PC-9 (cell line): ENCODE measurements at regions of chr9 and their contacts with region 1.

Region 1: DNA sequence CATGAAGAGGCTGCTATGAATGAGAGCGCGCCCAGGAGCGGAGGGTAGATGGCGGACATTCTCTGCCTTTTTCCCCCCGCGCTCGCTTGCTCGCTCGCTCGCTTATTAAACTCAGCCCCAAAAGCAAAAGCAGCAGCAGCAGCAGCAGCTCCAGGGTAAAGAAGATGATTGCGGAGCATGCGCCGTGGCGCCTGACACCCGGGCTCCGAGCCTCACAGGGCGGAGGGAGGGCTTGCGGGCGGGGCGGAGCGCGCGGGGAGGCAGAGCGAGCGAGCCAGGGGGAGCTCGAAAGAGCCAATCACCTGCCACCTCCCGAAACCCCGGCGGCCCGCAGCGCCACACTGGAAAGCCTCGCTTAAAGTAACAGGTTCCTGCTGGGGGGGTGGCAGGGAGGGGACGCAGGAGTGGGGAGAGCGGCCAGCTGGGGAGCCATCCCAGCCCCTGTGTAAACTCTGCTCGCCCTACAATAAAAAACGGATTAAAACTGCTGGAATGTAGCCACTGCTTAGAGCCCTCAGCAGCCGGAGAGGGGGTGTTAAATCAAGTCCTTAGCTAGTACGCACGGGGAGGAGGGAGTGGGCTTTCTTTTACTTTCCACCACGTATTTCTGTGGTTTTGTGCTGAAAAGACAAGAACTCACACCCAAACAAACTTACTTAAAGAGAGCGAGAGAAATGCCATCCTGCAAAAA is at the start of gene MLLT3:
- DNase-seq: peak; percentile 77 to 89
- H3K4me3 ChIP-seq: peak within 1 kb of the TSS; percentile 96
- H3K27ac ChIP-seq: peak within 1 kb of the TSS; percentile 63
- H3K4me1 ChIP-seq: peaks cover 23% of the 10 kb centered on the region
- H3K27me3 ChIP-seq: peaks cover 8% of the 10 kb centered on the region; the same call in 1 of the 2 replicates
- CTCF ChIP-seq: no peak
- total RNA-seq, gene MLLT3: 21.6 and 21.7 TPM in 2 replicates

Region 2: GRCh38 chr9:20426019-20426418 is 196.5 kb before region 1 on chr9:
- CTCF ChIA-PET with region 1: no interaction called
- POLR2A ChIA-PET with region 1: no interaction called
- intact Hi-C with region 1: loop called (anchors 5 kb)
- DNase-seq: no peak
- H3K4me3 ChIP-seq: no peak overlapping the region
- H3K27ac ChIP-seq: no peak overlapping the region
- H3K4me1 ChIP-seq: no peaks in the 10 kb centered on the region
- H3K27me3 ChIP-seq: no peaks in the 10 kb centered on the region
- CTCF ChIP-seq: no peak

Region 3: DNA sequence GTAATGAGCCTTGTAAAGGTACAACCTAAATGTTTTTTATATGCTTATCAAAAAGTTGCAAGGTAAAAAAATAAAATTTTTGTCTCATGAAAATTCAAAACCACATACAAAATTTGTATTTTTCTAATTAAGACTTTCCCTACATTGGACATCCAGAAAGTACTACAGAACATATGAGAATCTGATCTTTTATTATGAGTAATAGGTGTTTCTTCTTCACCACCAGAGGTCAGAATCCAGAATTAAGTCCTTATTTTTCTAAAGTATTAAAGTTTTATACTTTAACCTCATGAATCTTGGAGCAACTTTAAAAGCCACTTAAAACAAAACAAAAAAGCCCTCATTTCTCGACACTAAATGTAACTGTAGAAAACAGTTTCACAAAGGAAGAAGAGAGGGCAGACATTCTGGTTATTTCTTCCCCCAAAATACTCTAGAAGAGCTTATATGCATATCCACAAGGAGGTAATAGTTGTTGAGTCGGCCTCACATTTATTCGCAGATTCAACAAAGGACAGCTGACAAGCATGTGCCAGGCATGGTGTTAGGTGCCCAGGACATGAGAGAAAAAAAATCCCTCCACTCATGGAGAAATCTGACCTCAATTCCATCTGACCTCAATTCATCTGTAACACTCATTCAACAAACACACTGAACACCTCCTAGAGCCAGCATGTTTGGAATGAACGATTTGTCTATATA is 69.5 kb before region 1 on chr9:
- CTCF ChIA-PET with region 1: interaction called, 5 read pairs
- POLR2A ChIA-PET with region 1: no interaction called
- intact Hi-C with region 1: loop called (anchors 2 kb)
- DNase-seq: no peak
- H3K4me3 ChIP-seq: no peak overlapping the region
- H3K27ac ChIP-seq: peak overlapping the region; percentile 99
- H3K4me1 ChIP-seq: peaks cover 50% of the 10 kb centered on the region
- H3K27me3 ChIP-seq: no peaks in the 10 kb centered on the region
- CTCF ChIP-seq: 0 out of 2 replicates have a peak, but pooled peaks have one; percentile 30

Region 4: DNA sequence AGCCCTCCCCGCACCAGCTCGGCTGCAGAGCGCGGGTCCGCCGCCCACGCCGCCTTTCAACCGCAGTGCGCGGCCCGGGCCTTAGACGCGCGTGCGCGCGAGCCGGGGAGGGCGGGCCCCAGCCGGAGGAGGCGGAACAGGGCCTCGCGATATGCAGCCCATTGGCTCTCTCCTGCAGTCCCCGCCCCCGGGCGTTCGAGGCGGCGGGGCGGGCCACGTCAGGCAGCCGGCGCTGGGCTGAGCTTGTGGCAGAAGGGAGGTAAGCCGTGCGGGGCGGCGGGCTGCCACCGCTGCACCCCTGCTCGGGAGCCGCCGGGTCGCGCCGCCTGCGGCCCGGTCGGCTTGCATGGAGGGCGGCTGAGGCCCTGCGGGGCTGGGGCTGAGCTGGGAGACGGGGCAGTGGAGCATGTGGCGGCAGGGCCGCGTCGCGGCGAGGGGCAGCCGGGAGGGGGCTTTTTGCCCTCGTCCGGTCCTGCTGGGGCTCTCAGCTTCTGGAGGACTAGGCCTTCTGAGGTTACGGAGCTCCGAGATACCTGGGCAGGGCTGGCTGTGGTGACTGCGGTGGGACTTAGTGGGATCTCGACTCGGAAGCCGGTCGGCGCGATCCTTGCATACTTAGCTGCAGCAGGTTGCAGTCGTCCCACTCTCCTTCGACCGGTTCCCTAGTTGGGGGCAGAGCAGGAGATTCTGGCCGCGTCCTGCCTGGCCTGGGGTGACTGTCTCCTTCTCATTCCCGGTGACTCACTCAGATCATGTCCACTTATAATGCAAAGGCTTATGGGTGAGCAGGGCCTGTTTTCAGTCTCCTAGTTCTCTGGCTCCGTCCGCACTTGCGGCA is 61.8 kb after region 1 on chr9 and contains the start of gene FOCAD:
- CTCF ChIA-PET with region 1: no interaction called
- POLR2A ChIA-PET with region 1: interaction called, 11 read pairs
- intact Hi-C with region 1: loop called (anchors 1 kb)
- DNase-seq: peak; percentile 78 to 92
- H3K4me3 ChIP-seq: peak within 1 kb of the TSS; percentile 92
- H3K27ac ChIP-seq: peak within 1 kb of the TSS; percentile 72
- H3K4me1 ChIP-seq: peaks cover 14% of the 10 kb centered on the region
- H3K27me3 ChIP-seq: no peaks in the 10 kb centered on the region
- CTCF ChIP-seq: no peak
- total RNA-seq, gene FOCAD: 12.4 and 17.1 TPM in 2 replicates

Region 5: GRCh38 chr9:20786844-20787243 is 164.4 kb after region 1 on chr9:
- CTCF ChIA-PET with region 1: no interaction called
- POLR2A ChIA-PET with region 1: interaction called, 17 read pairs
- intact Hi-C with region 1: no loop called
- DNase-seq: no peak
- H3K4me3 ChIP-seq: no peak overlapping the region
- H3K27ac ChIP-seq: no peak overlapping the region
- H3K4me1 ChIP-seq: no peaks in the 10 kb centered on the region
- H3K27me3 ChIP-seq: no peaks in the 10 kb centered on the region
- CTCF ChIP-seq: no peak

Region 6: GRCh38 chr9:21110708-21111576 is 488.5 kb after region 1 on chr9:
- CTCF ChIA-PET with region 1: no interaction called
- POLR2A ChIA-PET with region 1: no interaction called
- intact Hi-C with region 1: loop called (anchors 2 kb)
- DNase-seq: peak; percentile 4 to 45
- H3K4me3 ChIP-seq: no peak overlapping the region
- H3K27ac ChIP-seq: no peak overlapping the region
- H3K4me1 ChIP-seq: no peaks in the 10 kb centered on the region
- H3K27me3 ChIP-seq: no peaks in the 10 kb centered on the region
- CTCF ChIP-seq: peak; percentile 82